ENCODE measurements at regions of chr2 and their contacts with region 1.

Region 1: GRCh38 chr2:12005886-12006681 is 259.7 kb downstream of the LPIN1 start:
- DNase-seq: no peak
- ATAC-seq: no peak
- H3K4me3 ChIP-seq: no peak overlapping the region
- H3K27ac ChIP-seq: no peak overlapping the region
- H3K4me1 ChIP-seq: peaks cover 5% of the 10 kb centered on the region; the same call in 1 of the 2 replicates
- H3K27me3 ChIP-seq: no peaks in the 10 kb centered on the region
- CTCF ChIP-seq: no peak
- POLR2A ChIP-seq: no peak
- RAD21 ChIP-seq: no peak

Region 2: DNA sequence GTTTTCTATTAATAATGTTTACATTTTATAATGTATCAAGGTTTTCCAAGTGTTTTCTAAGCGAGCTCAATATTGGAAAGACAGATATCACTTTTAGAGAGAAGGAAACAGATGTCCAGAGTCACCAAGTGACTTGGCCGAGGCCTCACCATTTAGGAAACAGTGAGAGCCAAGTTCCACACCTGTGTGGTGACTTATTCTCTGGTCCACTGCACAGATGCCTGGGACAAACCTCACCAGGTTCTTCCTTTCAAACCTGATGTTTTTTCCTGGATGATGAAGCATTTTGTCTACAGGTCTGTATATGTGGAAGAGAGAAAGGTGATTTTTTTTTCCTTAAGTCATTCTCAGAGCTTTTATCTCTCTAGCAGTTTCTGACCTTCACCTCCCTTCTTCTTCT is 21.1 kb after region 1 on chr2:
- CTCF ChIA-PET with region 1: no interaction called
- POLR2A ChIA-PET with region 1: no interaction called
- dilution Hi-C with region 1: no loop called
- in situ Hi-C with region 1: no loop called
- intact Hi-C with region 1: loop called (anchors 2 kb)
- DNase-seq: no peak
- ATAC-seq: no peak
- H3K4me3 ChIP-seq: no peak overlapping the region
- H3K27ac ChIP-seq: no peak overlapping the region
- H3K4me1 ChIP-seq: no peaks in the 10 kb centered on the region
- H3K27me3 ChIP-seq: no peaks in the 10 kb centered on the region
- CTCF ChIP-seq: no peak
- POLR2A ChIP-seq: no peak
- RAD21 ChIP-seq: no peak